ENCODE measurements at regions of chr9 and their contacts with region 1.

Region 1: GRCh38 chr9:110152704-110153374 is 55.1 kb downstream of the C9orf152 start:
- DNase-seq: no peak
- H3K4me3 ChIP-seq: no peak overlapping the region
- H3K27ac ChIP-seq: peak overlapping the region in 3 of 59 donors; percentile 17 to 22 (median 19)
- H3K27me3 ChIP-seq: no peaks in the 10 kb centered on the region
- CTCF ChIP-seq: peak; percentile 64 to 87 (median 78)

Region 2: GRCh38 chr9:109574068-109574882 is 578.6 kb before region 1 on chr9:
- intact Hi-C with region 1: loop called (anchors 5 to 10 kb)
- DNase-seq: peak in 3 of 10 donors; percentile 5 to 45 (median 10)
- H3K4me3 ChIP-seq: no peak overlapping the region
- H3K27ac ChIP-seq: peak overlapping the region in 1 of 59 donors; percentile 2
- H3K27me3 ChIP-seq: no peaks in the 10 kb centered on the region
- CTCF ChIP-seq: peak in 55 of 56 donors; percentile 60 to 92 (median 81)

Region 3: GRCh38 chr9:109779711-109780452 is 373.0 kb before region 1 on chr9 and contains the start of gene PALM2AKAP2:
- intact Hi-C with region 1: loop called in 1 of 2 experiments (anchors 5 kb)
- DNase-seq: peak in 9 of 10 donors; percentile 23 to 81 (median 54)
- H3K4me3 ChIP-seq: peak within 1 kb of the TSS; percentile 44 to 80 (median 65)
- H3K27ac ChIP-seq: peak within 1 kb of the TSS in 24 of 59 donors; percentile 16 to 73 (median 52)
- H3K27me3 ChIP-seq: peaks cover 0 to 3% (median 0%) of the 10 kb centered on the region in 45 donors
- CTCF ChIP-seq: peak in 32 of 56 donors; percentile 9 to 66 (median 30)
- total RNA-seq, gene PALM2AKAP2: 8.5 to 32.5 (median 20.2) TPM

Region 4: DNA sequence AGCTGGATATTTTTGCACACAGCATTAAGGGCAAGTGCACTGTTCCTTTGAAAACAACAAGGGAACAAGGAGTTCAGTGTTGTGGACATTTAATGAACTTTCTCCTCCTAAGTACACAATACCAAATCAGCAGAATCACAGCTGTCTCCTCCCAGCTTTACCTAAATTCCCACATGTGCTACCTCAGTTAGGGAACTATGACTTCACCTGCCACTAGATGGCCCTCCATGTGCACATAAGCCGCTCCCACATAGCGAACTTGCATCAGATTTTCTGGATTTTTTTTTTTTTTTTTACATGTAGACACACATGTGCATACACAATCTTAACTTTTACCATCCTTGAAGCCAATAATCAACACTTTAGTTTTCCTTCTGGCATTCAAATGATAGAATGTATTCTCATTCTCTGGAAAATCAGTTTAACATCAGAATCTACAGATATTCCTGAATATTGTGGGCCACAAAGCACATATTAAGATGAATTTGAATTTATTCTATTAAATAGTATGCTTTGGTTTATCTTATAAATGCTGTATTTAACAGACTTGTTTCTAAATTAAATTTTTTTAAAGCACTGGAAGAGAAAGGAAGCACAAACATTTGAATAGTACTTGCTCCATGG is 249.2 kb before region 1 on chr9:
- intact Hi-C with region 1: loop called (anchors 2 to 5 kb)
- DNase-seq: peak in 5 of 10 donors; percentile 34 to 70 (median 53)
- H3K4me3 ChIP-seq: no peak overlapping the region
- H3K27ac ChIP-seq: peak overlapping the region in 11 of 59 donors; percentile 2 to 57 (median 25)
- H3K27me3 ChIP-seq: no peaks in the 10 kb centered on the region
- CTCF ChIP-seq: peak; percentile 54 to 94 (median 82)

Region 5: DNA sequence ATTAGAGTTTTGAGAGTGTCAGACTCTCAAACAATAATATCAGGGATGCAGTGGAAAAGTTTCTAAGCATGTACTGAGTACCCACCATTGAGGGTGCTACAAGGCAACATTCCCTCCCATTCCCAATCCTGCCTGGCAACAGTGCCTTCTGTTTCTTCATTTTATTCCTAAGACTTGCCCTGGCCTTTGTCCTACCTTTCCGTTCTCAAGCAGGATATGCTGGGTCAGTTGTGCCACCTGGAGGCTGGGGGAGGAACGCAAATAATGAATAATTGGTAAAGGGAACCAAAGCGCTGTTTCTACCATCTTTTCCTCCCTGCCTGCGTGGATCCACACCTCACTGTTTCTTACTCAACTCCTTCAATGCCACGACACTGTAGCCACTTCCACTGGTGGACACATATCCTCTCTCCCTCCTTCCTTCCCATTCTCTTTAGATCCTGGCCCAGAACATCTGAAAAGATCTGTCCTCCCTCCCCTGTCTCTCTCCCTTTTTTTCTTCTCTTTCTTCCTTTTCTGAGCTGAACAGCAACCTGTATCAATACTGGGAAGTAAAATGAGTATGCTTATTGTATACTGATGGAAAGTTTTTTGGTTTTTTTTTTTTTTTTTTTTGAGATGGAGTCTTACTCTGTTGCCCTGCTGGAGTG is 94.4 kb before region 1 on chr9:
- intact Hi-C with region 1: loop called in 1 of 2 experiments (anchors 5 kb)
- DNase-seq: peak in 2 of 10 donors; percentile 11 to 50
- H3K4me3 ChIP-seq: no peak overlapping the region
- H3K27ac ChIP-seq: no peak overlapping the region
- H3K27me3 ChIP-seq: no peaks in the 10 kb centered on the region
- CTCF ChIP-seq: peak in 53 of 56 donors; percentile 16 to 70 (median 47)